ENCODE measurements at regions of chr20 and their contacts with region 1.

Region 1: DNA sequence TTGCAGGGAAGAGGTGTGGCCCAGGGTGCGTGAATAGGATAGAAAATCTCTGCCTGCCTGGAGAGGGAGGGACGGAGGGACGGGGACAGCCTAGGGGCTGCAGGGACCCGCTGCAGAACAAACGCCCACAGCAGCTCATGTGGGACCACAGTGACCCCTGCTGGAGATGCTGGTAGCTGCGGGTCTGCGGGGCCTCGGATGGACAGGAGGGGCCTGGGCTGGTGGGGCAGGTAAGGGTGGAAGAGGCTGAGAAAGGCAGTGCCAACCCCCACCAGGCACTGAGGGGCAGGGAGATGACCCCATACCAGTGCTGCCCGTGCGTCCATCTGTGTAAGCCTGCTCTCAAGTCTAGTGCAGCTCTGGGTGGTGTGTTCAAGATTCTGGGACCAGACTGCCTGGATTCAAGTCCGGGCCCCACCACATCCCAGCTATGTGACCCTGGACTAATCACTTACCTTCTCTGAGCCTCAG is 39.4 kb downstream of the KIAA1755 start:
- DNase-seq: peak; percentile 72
- ATAC-seq: peak; percentile 93
- H3K4me3 Mint-ChIP-seq: no peak overlapping the region
- H3K27ac Mint-ChIP-seq: no peak overlapping the region
- H3K4me1 Mint-ChIP-seq: peaks cover 3% of the 10 kb centered on the region
- H3K27me3 Mint-ChIP-seq: peaks cover 4% of the 10 kb centered on the region
- CTCF ChIP-seq: peak; percentile 37

Region 2: GRCh38 chr20:37564388-37565133 is 656.6 kb before region 1 on chr20:
- CTCF ChIA-PET with region 1: interaction called, 14 read pairs
- POLR2A ChIA-PET with region 1: no interaction called
- intact Hi-C with region 1: loop called (anchors 1 kb)
- DNase-seq: peak; percentile 58
- ATAC-seq: peak; percentile 77
- H3K4me3 Mint-ChIP-seq: no peak overlapping the region
- H3K27ac Mint-ChIP-seq: no peak overlapping the region
- H3K4me1 Mint-ChIP-seq: peaks cover 5% of the 10 kb centered on the region
- H3K27me3 Mint-ChIP-seq: peaks cover 32% of the 10 kb centered on the region
- CTCF ChIP-seq: peak; percentile 43

Region 3: DNA sequence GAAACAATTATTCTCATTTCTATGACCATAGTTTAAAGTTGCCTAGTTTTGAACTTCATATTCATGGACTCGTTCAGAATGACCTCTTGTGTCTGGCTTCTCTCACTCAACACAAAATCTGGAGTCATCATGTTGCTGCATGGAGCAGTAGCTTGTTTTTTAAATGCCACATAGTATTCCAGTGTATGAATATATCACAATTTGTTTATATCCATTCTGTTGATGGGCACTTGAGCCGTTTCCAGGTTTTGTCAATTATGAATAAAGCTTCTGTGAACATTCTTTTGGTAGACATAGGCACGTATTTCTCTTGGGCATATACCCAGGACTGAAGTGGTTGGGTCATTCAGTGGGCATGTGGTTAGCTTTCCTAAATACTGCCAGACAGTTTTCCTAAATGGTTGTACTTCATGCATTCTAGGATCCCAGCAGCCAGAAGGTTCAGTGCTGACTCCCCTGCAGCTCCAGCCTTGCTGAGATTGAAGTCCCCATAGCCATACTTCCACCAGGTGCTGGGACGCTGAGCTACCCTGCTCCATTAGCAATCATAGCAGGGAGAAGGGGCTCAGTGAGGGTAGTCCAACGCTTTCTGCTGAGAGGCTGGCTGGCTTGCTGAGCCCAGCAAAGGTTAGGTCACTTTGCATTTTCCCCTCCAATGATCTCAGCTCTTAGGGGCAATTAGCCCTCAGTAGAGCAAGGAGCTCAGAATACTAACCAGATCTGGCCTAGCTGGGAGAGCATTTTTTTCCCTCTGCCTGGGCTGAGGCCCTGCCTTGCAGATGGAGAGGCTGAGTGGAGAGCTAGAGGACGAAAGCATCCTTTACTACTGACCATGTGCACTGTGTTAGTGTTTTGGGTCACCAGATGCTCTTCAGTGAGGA is 563.0 kb before region 1 on chr20:
- CTCF ChIA-PET with region 1: no interaction called
- POLR2A ChIA-PET with region 1: no interaction called
- intact Hi-C with region 1: no loop called
- DNase-seq: no peak
- ATAC-seq: no peak
- H3K4me3 Mint-ChIP-seq: no peak overlapping the region
- H3K27ac Mint-ChIP-seq: no peak overlapping the region
- H3K4me1 Mint-ChIP-seq: no peaks in the 10 kb centered on the region
- H3K27me3 Mint-ChIP-seq: peaks cover 5% of the 10 kb centered on the region
- CTCF ChIP-seq: no peak

Region 4: GRCh38 chr20:37880726-37881591 is 340.2 kb before region 1 on chr20:
- CTCF ChIA-PET with region 1: no interaction called
- POLR2A ChIA-PET with region 1: no interaction called
- intact Hi-C with region 1: no loop called
- DNase-seq: no peak
- ATAC-seq: no peak
- H3K4me3 Mint-ChIP-seq: no peak overlapping the region
- H3K27ac Mint-ChIP-seq: no peak overlapping the region
- H3K4me1 Mint-ChIP-seq: no peaks in the 10 kb centered on the region
- H3K27me3 Mint-ChIP-seq: no peaks in the 10 kb centered on the region
- CTCF ChIP-seq: no peak

Region 5: DNA sequence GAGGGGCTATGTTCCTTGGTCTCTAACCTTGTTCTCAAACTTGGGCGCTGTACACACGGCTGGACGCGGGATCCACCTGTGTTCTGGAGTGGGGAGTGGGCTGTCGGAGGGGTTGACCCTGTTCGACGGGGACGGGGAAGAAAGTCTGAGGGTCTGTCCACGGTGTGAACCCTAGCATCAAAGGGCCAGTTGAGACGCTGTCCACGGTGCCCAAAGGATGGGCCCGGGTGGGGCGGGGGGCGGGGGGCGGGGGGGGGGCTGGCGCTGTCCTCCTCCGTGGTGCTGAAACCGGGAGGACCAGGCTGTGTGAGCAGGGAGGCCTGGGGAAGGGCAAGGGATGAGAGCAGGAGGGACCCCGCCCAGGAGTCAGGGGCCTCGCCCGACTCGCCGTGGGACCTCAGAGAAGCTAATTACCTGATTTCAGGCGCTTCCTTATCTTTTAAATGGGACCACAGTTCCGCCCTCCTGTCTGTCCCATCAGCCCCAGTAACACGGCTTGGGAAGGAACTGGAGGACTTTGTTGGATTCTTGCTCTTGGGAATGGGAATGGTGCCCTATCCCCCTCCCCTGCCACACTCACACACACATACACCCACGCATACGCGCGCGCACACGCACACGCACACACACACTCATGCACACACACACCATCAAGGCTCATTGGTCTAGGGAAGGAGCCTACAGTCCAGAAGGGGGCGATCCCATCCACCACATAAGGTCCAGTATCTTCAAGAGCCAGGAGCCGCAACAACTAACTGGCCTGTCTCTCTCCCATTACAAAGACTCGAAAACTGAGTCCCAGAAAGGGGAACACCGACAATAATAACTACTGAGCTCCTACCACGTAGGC is 319.3 kb before region 1 on chr20:
- CTCF ChIA-PET with region 1: no interaction called
- POLR2A ChIA-PET with region 1: no interaction called
- intact Hi-C with region 1: loop called (anchors 1 kb)
- DNase-seq: peak; percentile 19
- ATAC-seq: peak; percentile 45
- H3K4me3 Mint-ChIP-seq: peak overlapping the region; percentile 69
- H3K27ac Mint-ChIP-seq: no peak overlapping the region
- H3K4me1 Mint-ChIP-seq: peaks cover 12% of the 10 kb centered on the region
- H3K27me3 Mint-ChIP-seq: peaks cover 46% of the 10 kb centered on the region
- CTCF ChIP-seq: no peak

Region 6: DNA sequence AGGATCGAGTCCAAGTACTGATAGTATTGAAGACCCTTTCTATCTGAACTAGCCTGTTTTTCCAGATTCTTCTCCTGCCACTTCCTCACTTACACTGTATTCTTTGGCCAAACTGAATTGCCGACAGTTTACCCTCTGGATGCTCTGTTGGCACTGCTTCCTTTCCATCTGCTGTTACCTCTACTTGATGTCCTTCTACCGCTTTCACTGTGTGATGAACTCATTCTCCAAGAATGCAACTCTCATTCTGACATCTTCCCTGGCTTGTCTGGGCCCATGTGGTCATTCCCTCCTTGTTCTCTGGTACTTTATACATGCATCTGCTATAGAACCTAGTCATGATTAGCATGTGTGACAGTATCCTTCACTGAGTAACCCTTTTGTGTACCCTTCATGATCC is 171.4 kb before region 1 on chr20:
- CTCF ChIA-PET with region 1: interaction called, 307 read pairs
- POLR2A ChIA-PET with region 1: no interaction called
- intact Hi-C with region 1: no loop called
- DNase-seq: no peak
- ATAC-seq: no peak
- H3K4me3 Mint-ChIP-seq: no peak overlapping the region
- H3K27ac Mint-ChIP-seq: no peak overlapping the region
- H3K4me1 Mint-ChIP-seq: peaks cover 2% of the 10 kb centered on the region
- H3K27me3 Mint-ChIP-seq: no peaks in the 10 kb centered on the region
- CTCF ChIP-seq: no peak

Region 7: GRCh38 chr20:38165089-38165989 is 55.8 kb before region 1 on chr20 and contains the start of gene TGM2:
- CTCF ChIA-PET with region 1: interaction called, 12 read pairs
- POLR2A ChIA-PET with region 1: no interaction called
- intact Hi-C with region 1: loop called (anchors 1 kb)
- DNase-seq: peak; percentile 74
- ATAC-seq: peak; percentile 94
- H3K4me3 Mint-ChIP-seq: peak within 1 kb of the TSS; percentile 75
- H3K27ac Mint-ChIP-seq: no peak within 1 kb of the TSS
- H3K4me1 Mint-ChIP-seq: peaks cover 29% of the 10 kb centered on the region
- H3K27me3 Mint-ChIP-seq: no peaks in the 10 kb centered on the region
- CTCF ChIP-seq: no peak
- total RNA-seq, gene TGM2: 20.8 and 22.9 TPM in 2 replicates

Region 8: DNA sequence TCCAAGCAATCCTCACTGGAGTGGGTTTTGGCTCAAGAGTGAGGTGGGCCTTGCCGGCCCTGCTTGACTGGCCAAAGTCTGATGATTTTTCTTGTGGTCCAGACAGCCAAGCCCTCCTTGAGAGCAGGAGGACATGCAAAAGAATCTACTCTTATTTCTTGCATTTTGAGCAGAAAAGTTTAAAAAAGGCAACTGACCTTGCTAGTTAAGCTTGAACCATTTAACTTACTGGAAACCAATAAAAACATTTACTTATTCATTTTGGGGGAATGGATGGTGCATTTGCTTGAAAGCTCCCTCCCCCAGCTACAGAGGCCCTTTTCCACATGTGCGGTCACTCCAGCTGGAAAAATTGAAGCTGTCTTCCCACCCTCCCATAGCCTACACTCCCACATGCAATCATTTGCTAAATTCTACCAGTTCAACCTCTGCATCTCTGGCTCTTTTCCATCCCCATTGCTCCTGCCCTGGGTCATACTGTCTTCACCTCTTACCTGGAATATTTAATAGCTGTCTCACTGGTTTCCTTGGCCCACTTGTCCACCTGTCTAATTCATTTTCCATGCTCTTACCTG is 1268.9 kb after region 1 on chr20:
- CTCF ChIA-PET with region 1: no interaction called
- POLR2A ChIA-PET with region 1: no interaction called
- intact Hi-C with region 1: no loop called
- DNase-seq: no peak
- ATAC-seq: no peak
- H3K4me3 Mint-ChIP-seq: no peak overlapping the region
- H3K27ac Mint-ChIP-seq: no peak overlapping the region
- H3K4me1 Mint-ChIP-seq: no peaks in the 10 kb centered on the region
- H3K27me3 Mint-ChIP-seq: peaks cover 1% of the 10 kb centered on the region
- CTCF ChIP-seq: no peak